ENCODE measurements at regions of chr6 and their contacts with region 1.

Region 1: GRCh38 chr6:111709615-111710398 is 104.1 kb upstream of the TRAF3IP2 start:
- DNase-seq: peak in 1 of 2 donors; percentile 86
- ATAC-seq: peak; percentile 81
- H3K4me3 ChIP-seq: no peak overlapping the region
- H3K4me3 Mint-ChIP-seq: peak overlapping the region; percentile 58
- H3K27ac ChIP-seq: peak overlapping the region; percentile 56
- H3K27ac Mint-ChIP-seq: peak overlapping the region; percentile 98 to 100
- H3K4me1 ChIP-seq: peaks cover 44% of the 10 kb centered on the region
- H3K4me1 Mint-ChIP-seq: peaks cover 53 to 61% of the 10 kb centered on the region in 2 donors
- H3K27me3 ChIP-seq: no peaks in the 10 kb centered on the region
- H3K27me3 Mint-ChIP-seq: no peaks in the 10 kb centered on the region
- CTCF ChIP-seq: peak; percentile 76

Region 2: GRCh38 chr6:111997078-111997852 is 287.5 kb after region 1 on chr6:
- intact Hi-C with region 1: loop called (anchors 1 kb)
- DNase-seq: peak; percentile 66 to 93
- ATAC-seq: peak; percentile 81 to 90 (median 86)
- H3K4me3 ChIP-seq: no peak overlapping the region
- H3K4me3 Mint-ChIP-seq: peak overlapping the region; percentile 18
- H3K27ac ChIP-seq: no peak overlapping the region
- H3K27ac Mint-ChIP-seq: peak overlapping the region; percentile 27 to 61
- H3K4me1 ChIP-seq: peaks cover 23% of the 10 kb centered on the region
- H3K4me1 Mint-ChIP-seq: peaks cover 30 to 33% of the 10 kb centered on the region in 2 donors
- H3K27me3 ChIP-seq: no peaks in the 10 kb centered on the region
- H3K27me3 Mint-ChIP-seq: no peaks in the 10 kb centered on the region
- CTCF ChIP-seq: peak; percentile 94

Region 3: DNA sequence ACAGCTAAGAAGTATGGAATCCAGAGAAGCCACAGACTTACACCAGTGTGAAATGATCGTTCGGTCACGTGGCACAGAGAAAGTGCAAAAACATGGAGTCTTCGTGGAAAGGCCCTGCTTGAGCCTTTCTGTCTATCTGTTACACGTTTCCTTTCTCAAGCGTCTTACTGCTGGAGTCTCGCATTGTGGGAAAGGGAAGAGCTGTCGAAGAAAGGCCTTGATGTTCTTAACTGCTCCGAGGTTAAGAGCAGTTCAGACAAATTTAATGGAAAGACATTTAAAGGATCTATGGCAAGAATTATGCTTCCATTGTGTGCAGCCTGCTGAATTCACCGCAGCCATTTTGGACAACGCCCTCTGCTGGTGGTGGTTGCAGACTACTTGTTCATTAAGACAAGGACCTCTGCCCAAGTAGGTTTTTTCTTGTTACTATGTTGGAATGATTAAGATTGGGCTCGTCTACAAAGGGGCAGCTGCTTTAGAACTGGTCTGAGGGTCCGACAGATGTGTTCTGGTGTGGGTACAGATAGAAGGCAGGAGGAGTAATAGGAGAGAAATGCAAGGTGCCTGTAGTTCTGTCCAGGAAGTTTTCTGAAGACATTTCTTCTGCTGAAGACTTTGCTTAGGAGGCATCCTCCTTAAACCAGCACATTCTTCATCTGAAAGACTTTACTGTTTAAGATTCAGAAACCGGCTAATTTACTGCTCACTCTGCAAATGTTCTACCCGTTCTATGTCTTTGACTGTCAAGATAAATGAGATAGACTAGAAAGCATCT is 319.4 kb after region 1 on chr6:
- intact Hi-C with region 1: loop called (anchors 2 kb)
- DNase-seq: peak; percentile 50 to 81
- ATAC-seq: no peak
- H3K4me3 ChIP-seq: no peak overlapping the region
- H3K4me3 Mint-ChIP-seq: peak overlapping the region; percentile 67
- H3K27ac ChIP-seq: no peak overlapping the region
- H3K27ac Mint-ChIP-seq: peak overlapping the region; percentile 32 to 48
- H3K4me1 ChIP-seq: peaks cover 24% of the 10 kb centered on the region
- H3K4me1 Mint-ChIP-seq: peaks cover 27 to 37% of the 10 kb centered on the region in 2 donors
- H3K27me3 ChIP-seq: no peaks in the 10 kb centered on the region
- H3K27me3 Mint-ChIP-seq: peaks cover 0 to 12% of the 10 kb centered on the region in 2 donors
- CTCF ChIP-seq: peak; percentile 66

Region 4: DNA sequence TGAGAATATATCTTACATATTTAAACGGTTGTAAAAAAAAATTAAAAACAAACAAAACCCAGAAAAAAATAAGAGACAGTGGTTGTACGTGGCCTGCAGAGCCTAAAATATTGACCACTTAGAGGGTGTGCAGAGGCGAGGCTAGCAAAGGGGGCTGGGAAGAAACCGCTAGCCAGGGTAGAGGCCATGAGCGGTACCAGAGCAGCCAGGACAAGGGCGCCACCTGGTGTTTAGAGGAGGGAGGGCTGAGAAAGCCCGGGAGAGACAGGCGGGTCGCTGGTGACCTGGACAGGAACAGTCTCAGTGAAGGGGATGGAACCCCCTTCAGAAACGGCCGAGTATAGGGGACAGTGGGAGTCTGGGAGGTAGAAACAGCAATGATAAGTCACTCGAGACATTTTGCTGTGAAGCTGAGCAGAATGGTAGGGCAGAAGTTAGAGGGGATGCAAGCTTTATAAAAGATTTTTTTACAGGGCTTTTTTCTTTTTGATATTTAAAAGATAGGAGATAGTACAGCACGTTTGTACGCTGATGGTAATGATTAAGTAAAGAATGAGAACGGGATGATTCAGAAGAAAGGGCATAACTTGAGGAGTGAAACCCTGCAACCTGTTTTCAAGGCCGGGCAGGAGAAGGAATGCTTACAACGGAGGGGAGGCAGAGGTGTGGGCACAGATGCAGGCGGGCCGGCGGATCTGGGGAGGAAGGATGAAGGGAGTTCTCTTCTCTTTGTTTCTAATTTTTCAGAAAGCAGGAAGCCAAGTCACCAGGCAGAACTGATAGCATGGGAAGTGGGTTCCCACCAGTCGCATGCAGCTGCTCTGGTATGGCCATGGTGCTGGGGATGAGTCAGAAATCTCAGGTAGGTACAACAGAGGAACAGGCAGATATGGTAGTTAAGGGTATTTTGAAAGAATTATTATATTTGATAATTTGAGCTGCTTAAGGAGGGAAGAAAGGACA is 453.8 kb after region 1 on chr6:
- intact Hi-C with region 1: loop called (anchors 1 kb)
- DNase-seq: peak; percentile 66 to 84
- ATAC-seq: peak; percentile 88 to 99 (median 99)
- H3K4me3 ChIP-seq: no peak overlapping the region
- H3K4me3 Mint-ChIP-seq: no peak overlapping the region
- H3K27ac ChIP-seq: no peak overlapping the region
- H3K27ac Mint-ChIP-seq: no peak overlapping the region
- H3K4me1 ChIP-seq: peaks cover 4% of the 10 kb centered on the region
- H3K4me1 Mint-ChIP-seq: peaks cover 6 to 7% of the 10 kb centered on the region in 2 donors
- H3K27me3 ChIP-seq: peaks cover 9% of the 10 kb centered on the region
- H3K27me3 Mint-ChIP-seq: peaks cover 52 to 74% of the 10 kb centered on the region in 2 donors
- CTCF ChIP-seq: peak; percentile 91

Measured in natural killer cell (primary cell).